ENCODE measurements at regions of chr11 and their contacts with region 1.

Region 1: GRCh38 chr11:11787305-11788062 is 54.3 kb upstream of the USP47 start:
- DNase-seq: peak; percentile 34 to 69 (median 58)
- ATAC-seq: peak; percentile 88
- H3K4me3 ChIP-seq: no peak overlapping the region
- H3K4me3 Mint-ChIP-seq: no peak overlapping the region
- H3K27ac ChIP-seq: no peak overlapping the region
- H3K27ac Mint-ChIP-seq: no peak overlapping the region
- H3K4me1 ChIP-seq: no peaks in the 10 kb centered on the region
- H3K4me1 Mint-ChIP-seq: peaks cover 0 to 4% (median 0%) of the 10 kb centered on the region in 7 donors
- H3K27me3 ChIP-seq: peaks cover 0 to 4% of the 10 kb centered on the region in 2 donors
- H3K27me3 Mint-ChIP-seq: peaks cover 5 to 24% (median 9%) of the 10 kb centered on the region in 5 donors

Region 2: GRCh38 chr11:10413268-10413667 is 1374.2 kb before region 1 on chr11:
- CTCF ChIA-PET with region 1: interaction called, 3 read pairs
- POLR2A ChIA-PET with region 1: no interaction called
- intact Hi-C with region 1: loop called in 1 of 2 experiments (anchors 2 kb)
- DNase-seq: peak in 7 of 9 donors; percentile 35 to 65 (median 57)
- ATAC-seq: peak; percentile 81
- H3K4me3 ChIP-seq: no peak overlapping the region
- H3K4me3 Mint-ChIP-seq: no peak overlapping the region
- H3K27ac ChIP-seq: no peak overlapping the region
- H3K27ac Mint-ChIP-seq: no peak overlapping the region
- H3K4me1 ChIP-seq: peaks cover 12 to 27% of the 10 kb centered on the region in 2 donors
- H3K4me1 Mint-ChIP-seq: peaks cover 29 to 47% (median 39%) of the 10 kb centered on the region in 7 donors
- H3K27me3 ChIP-seq: no peaks in the 10 kb centered on the region
- H3K27me3 Mint-ChIP-seq: peaks cover 0 to 16% (median 0%) of the 10 kb centered on the region in 5 donors

Region 3: GRCh38 chr11:10792398-10792975 is 995.0 kb before region 1 on chr11:
- CTCF ChIA-PET with region 1: interaction called, 17 read pairs
- POLR2A ChIA-PET with region 1: no interaction called
- intact Hi-C with region 1: loop called (anchors 1 to 2 kb)
- DNase-seq: peak; percentile 58 to 90 (median 77)
- ATAC-seq: peak; percentile 89
- H3K4me3 ChIP-seq: peak overlapping the region; percentile 40
- H3K4me3 Mint-ChIP-seq: peak overlapping the region in 6 of 10 donors; percentile 1 to 37 (median 16)
- H3K27ac ChIP-seq: no peak overlapping the region
- H3K27ac Mint-ChIP-seq: peak overlapping the region in 2 of 9 donors; percentile 15 to 24
- H3K4me1 ChIP-seq: peaks cover 4 to 20% of the 10 kb centered on the region in 2 donors
- H3K4me1 Mint-ChIP-seq: peaks cover 14 to 26% (median 23%) of the 10 kb centered on the region in 7 donors
- H3K27me3 ChIP-seq: no peaks in the 10 kb centered on the region
- H3K27me3 Mint-ChIP-seq: peaks cover 0 to 23% (median 8%) of the 10 kb centered on the region in 5 donors

Region 4: DNA sequence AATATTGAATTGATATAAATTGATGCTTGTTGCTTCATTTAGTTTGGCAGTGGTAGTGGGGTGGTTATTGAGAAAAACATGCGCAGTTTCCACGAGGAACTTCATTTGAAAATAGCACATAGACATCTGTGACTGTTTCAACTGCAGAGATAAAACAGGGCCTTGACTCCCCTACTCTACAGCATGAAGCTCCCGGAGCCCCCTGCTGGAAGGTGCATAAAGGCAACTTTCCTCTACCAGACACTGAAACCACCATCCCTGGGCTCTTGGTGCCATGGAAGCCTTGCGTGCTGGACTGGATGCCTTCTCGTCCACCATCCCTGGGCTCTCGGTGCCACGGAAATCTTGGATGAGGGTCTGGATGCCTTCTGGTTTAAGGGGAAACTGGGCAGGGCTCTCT is 630.3 kb before region 1 on chr11:
- CTCF ChIA-PET with region 1: interaction called, 5 read pairs
- POLR2A ChIA-PET with region 1: no interaction called
- intact Hi-C with region 1: loop called in 1 of 2 experiments (anchors 1 kb)
- DNase-seq: peak in 8 of 9 donors; percentile 28 to 79 (median 72)
- ATAC-seq: peak; percentile 75
- H3K4me3 ChIP-seq: no peak overlapping the region
- H3K4me3 Mint-ChIP-seq: peak overlapping the region in 6 of 10 donors; percentile 75 to 92 (median 84)
- H3K27ac ChIP-seq: peak overlapping the region; percentile 72
- H3K27ac Mint-ChIP-seq: peak overlapping the region in 8 of 9 donors; percentile 86 to 99 (median 94)
- H3K4me1 ChIP-seq: peaks cover 11 to 28% of the 10 kb centered on the region in 2 donors
- H3K4me1 Mint-ChIP-seq: peaks cover 15 to 49% (median 44%) of the 10 kb centered on the region in 7 donors
- H3K27me3 ChIP-seq: no peaks in the 10 kb centered on the region
- H3K27me3 Mint-ChIP-seq: peaks cover 0 to 8% (median 0%) of the 10 kb centered on the region in 5 donors

Region 5: DNA sequence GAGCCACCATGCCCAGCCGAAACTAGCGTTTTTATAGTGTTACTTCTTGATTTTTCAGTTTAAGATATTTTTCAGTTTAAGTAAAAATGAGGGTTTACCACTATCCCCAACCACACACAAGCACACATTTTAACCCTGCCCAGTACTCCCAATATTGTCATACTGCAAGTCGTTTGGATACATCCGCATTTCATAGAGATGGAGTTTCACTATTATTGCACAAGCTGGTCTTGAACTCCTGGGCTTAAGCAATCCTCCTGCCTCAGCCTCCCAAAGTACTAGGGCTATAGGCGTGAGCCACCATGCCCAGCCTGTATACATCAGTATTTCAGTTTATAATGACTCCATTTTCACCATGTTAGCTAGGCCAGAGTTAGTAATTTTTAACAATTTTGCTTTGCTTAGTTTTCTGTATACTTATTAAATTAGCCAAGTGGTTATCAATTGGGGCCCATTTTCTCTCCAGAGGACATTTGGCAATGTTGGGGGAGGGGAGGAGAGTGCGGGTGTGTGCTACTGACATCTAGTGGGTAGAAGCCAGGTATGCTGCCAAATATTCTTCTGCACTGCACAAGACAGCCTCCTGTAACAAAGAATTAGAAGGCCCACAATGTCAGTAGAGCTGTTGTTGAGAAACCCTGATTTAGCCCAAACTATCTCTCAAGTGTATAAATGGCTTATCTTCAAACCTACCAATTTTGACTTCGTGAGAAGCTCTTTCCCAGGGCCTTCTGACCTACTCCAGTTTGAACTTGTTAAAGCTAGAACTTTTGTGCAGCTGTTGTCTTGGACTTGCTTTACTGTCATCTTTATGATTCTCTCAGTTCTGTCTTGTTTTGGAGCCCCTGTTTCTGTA is 61.6 kb after region 1 on chr11:
- CTCF ChIA-PET with region 1: interaction called, 3 read pairs
- POLR2A ChIA-PET with region 1: no interaction called
- intact Hi-C with region 1: loop called in 1 of 2 experiments (anchors 2 kb)
- DNase-seq: peak; percentile 24 to 76 (median 73)
- ATAC-seq: peak; percentile 98
- H3K4me3 ChIP-seq: peak overlapping the region; percentile 26
- H3K4me3 Mint-ChIP-seq: peak overlapping the region in 9 of 10 donors; percentile 47 to 79 (median 56)
- H3K27ac ChIP-seq: no peak overlapping the region
- H3K27ac Mint-ChIP-seq: peak overlapping the region in 8 of 9 donors; percentile 11 to 88 (median 72)
- H3K4me1 ChIP-seq: peaks cover 47 to 65% of the 10 kb centered on the region in 2 donors
- H3K4me1 Mint-ChIP-seq: peaks cover 53 to 75% (median 55%) of the 10 kb centered on the region in 7 donors
- H3K27me3 ChIP-seq: no peaks in the 10 kb centered on the region
- H3K27me3 Mint-ChIP-seq: no peaks in the 10 kb centered on the region